Activated B cell treated with CpG ODN at 0.5 μM for 24 hours (primary cell): ENCODE measurements at regions of chr19 and their contacts with region 1.

Region 1: DNA sequence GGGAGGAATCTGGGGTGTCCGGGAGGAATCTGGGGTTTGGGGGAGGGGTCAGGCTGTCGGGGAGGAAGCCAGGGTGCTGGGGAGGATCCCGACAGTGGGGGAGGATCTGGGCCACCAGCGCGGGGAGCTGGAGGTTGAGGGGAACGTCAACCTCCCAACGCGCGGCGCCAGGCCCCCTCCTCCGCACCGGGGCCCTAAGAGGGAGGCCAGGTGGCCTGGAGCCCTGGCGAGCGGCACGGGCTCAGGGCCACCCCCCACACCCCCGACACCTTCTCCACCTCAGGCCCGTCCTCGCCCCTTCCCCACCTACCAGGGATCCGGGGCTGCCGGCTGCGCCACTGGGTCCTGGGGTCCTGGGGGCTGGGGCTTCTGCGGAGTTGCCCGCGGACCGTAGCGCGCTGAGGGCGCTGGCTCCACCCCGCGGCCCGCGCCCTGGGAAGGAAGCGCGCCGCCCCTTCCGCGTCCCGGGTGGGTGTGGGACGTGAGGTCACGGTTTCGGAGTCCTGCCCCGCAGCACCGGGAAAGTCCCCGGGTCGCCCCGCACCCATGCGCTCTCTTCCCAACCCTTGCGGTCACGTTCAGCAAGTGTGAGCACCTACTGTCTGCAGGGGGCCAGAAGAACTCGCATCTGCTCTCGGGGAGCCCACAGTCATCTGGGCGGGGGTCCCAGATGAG is at the start of gene TICAM1:
- DNase-seq: peak; percentile 78
- ATAC-seq: peak; percentile 76
- H3K4me3 Mint-ChIP-seq: peak within 1 kb of the TSS; percentile 90
- H3K27ac Mint-ChIP-seq: peak within 1 kb of the TSS; percentile 94
- H3K4me1 Mint-ChIP-seq: peaks cover 40% of the 10 kb centered on the region
- H3K27me3 Mint-ChIP-seq: no peaks in the 10 kb centered on the region
- CTCF ChIP-seq: no peak
- total RNA-seq, gene TICAM1: 34.4 and 39.4 TPM in 2 replicates

Region 2: DNA sequence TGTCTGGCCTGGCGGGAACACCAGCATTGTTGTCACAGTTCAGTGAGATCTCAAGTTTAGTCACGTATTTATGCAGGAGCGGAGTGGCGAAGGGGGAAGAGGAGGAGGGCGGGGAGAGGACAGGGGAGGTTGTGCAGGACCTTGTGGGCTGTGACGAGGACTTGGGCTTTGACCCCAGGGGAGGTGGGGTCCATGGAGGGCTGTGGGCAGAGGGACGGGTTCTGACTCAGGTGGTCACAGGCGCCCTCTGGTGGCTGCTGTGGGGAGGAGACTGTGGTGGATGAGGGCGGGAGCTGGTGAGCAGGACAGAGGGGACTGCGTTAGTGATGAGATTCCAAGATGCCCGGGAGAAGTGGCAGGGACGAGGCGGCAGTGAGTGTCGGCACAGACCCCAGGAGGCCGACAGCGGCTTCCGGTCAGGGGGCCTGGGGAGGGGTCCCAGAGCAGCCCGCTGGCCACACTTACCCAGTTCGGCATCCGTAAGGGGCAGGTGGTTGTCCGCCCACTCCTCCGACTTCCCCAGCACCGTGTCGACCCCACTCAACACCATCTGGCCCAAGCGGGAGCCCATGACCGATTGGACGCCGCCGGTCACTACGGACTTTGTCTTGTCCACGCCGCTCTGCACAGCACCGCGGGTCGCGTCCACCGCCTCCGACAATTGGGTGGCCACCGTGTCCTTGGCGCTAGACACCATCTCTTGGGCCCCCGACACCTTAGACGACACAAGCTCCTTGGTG is 20.3 kb after region 1 on chr19:
- CTCF ChIA-PET with region 1: interaction called, 4 read pairs
- POLR2A ChIA-PET with region 1: interaction called, 5 read pairs
- intact Hi-C with region 1: loop called (anchors 1 kb)
- DNase-seq: peak; percentile 77
- ATAC-seq: peak; percentile 94
- H3K4me3 Mint-ChIP-seq: no peak overlapping the region
- H3K27ac Mint-ChIP-seq: no peak overlapping the region
- H3K4me1 Mint-ChIP-seq: peaks cover 17% of the 10 kb centered on the region
- H3K27me3 Mint-ChIP-seq: no peaks in the 10 kb centered on the region
- CTCF ChIP-seq: peak; percentile 63

Region 3: GRCh38 chr19:4968462-4969291 is 137.2 kb after region 1 on chr19 and contains the start of gene KDM4B:
- CTCF ChIA-PET with region 1: no interaction called
- POLR2A ChIA-PET with region 1: no interaction called
- intact Hi-C with region 1: no loop called
- DNase-seq: peak; percentile 99
- ATAC-seq: peak; percentile 89
- H3K4me3 Mint-ChIP-seq: peak within 1 kb of the TSS; percentile 88
- H3K27ac Mint-ChIP-seq: peak within 1 kb of the TSS; percentile 88
- H3K4me1 Mint-ChIP-seq: peaks cover 31% of the 10 kb centered on the region
- H3K27me3 Mint-ChIP-seq: no peaks in the 10 kb centered on the region
- CTCF ChIP-seq: no peak
- total RNA-seq, gene KDM4B: 76.4 and 88.9 TPM in 2 replicates

Region 4: GRCh38 chr19:4996701-4997100 is 165.3 kb after region 1 on chr19:
- CTCF ChIA-PET with region 1: no interaction called
- POLR2A ChIA-PET with region 1: interaction called, 10 read pairs
- intact Hi-C with region 1: no loop called
- DNase-seq: no peak
- ATAC-seq: no peak
- H3K4me3 Mint-ChIP-seq: no peak overlapping the region
- H3K27ac Mint-ChIP-seq: no peak overlapping the region
- H3K4me1 Mint-ChIP-seq: peaks cover 13% of the 10 kb centered on the region
- H3K27me3 Mint-ChIP-seq: no peaks in the 10 kb centered on the region
- CTCF ChIP-seq: no peak

Region 5: GRCh38 chr19:5018224-5019015 is 187.0 kb after region 1 on chr19:
- CTCF ChIA-PET with region 1: no interaction called
- POLR2A ChIA-PET with region 1: no interaction called
- intact Hi-C with region 1: no loop called
- DNase-seq: no peak
- ATAC-seq: no peak
- H3K4me3 Mint-ChIP-seq: no peak overlapping the region
- H3K27ac Mint-ChIP-seq: no peak overlapping the region
- H3K4me1 Mint-ChIP-seq: no peaks in the 10 kb centered on the region
- H3K27me3 Mint-ChIP-seq: no peaks in the 10 kb centered on the region
- CTCF ChIP-seq: no peak